ENCODE measurements at regions of chr2 and their contacts with region 1.

Region 1: DNA sequence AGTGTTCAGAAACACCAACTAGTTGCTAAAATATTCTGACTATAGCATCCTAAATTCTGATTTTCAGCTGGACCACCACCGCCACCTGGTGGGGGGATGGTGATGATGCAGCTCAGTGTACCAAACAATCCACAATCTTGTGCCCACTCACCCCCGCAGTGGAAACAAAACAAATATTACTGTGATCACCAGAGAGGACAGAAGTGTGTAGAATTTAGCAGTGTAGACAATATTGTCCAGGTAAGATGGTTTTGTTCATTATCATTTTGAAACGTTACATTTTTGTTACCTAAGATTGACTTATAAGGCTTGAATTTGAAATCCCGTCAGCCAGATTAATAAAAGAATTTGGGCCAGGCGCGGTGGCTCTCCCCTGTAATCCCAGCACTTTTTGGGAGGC is 31.7 kb upstream of the UBXN4 start:
- DNase-seq: peak; percentile 39
- ATAC-seq: peak; percentile 94
- H3K4me3 ChIP-seq: no peak overlapping the region
- H3K27ac ChIP-seq: no peak overlapping the region
- H3K4me1 ChIP-seq: no peaks in the 10 kb centered on the region
- H3K27me3 ChIP-seq: no peaks in the 10 kb centered on the region
- CTCF ChIP-seq: peak; percentile 89
- POLR2A ChIP-seq: no peak
- RAD21 ChIP-seq: peak; percentile 92

Region 2: DNA sequence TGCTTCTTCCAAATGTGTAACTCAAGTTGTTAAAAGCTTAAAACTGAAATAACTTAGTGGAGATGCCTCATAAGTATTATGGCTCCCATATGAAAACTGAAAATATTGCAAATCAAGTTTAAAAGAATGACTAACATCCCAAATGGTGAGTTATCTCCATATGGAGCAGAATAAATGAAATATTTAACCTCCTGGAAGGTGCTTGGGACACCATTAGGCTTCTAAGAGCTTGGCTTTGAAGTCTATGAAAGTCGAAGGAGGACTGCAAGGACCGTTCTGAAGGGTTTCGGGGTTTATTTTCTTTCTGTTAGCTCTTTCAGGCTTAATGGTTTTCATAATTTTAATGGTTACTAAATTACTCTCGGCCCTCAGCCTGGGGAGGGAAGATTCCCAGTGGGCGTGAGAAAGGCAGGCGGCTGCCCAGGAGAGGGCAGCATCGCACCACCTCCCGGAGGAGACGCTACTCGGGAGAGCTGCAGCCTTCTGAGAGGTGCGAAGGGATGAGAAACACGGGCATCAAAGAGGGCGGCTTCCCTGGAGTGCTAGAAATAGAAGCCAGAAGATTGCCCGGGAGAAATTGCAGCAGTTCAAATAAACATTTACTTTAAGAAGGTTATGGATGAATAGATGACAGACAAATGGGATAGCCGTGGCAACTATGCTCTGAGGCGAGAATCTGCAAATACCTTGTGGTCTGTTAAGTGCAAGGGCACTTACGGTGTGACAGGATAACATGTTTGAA is 705.8 kb before region 1 on chr2:
- CTCF ChIA-PET with region 1: interaction called, 21 read pairs
- POLR2A ChIA-PET with region 1: no interaction called
- dilution Hi-C with region 1: no loop called
- in situ Hi-C with region 1: loop called (anchors 5 kb)
- intact Hi-C with region 1: loop called (anchors 1 kb)
- DNase-seq: peak; percentile 62
- ATAC-seq: peak; percentile 100
- H3K4me3 ChIP-seq: no peak overlapping the region
- H3K27ac ChIP-seq: no peak overlapping the region
- H3K4me1 ChIP-seq: no peaks in the 10 kb centered on the region
- H3K27me3 ChIP-seq: peaks cover 17% of the 10 kb centered on the region
- CTCF ChIP-seq: peak; percentile 96
- POLR2A ChIP-seq: no peak
- RAD21 ChIP-seq: peak; percentile 99

Region 3: DNA sequence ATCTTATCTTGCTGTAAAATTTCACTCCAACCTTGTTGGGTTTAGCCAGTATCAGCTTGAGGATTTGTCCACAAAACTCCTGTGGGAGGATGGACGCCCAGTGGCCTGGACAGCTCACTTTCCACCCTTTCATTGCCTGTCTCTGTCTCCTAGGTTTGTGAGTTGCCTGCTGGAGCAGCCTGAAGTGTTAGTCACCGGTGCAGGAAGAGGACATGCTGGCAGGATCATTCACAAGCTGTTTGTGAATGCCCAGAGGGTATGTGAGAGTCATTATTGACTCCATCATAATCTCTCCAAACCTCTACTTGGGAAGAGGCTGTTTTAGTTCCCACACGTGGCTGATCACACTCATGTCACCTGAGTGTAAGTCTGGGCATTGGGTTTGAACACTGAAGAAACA is 545.6 kb before region 1 on chr2:
- CTCF ChIA-PET with region 1: no interaction called
- POLR2A ChIA-PET with region 1: no interaction called
- dilution Hi-C with region 1: no loop called
- in situ Hi-C with region 1: no loop called
- intact Hi-C with region 1: loop called (anchors 10 kb)
- DNase-seq: peak; percentile 89
- ATAC-seq: peak; percentile 95
- H3K4me3 ChIP-seq: no peak overlapping the region
- H3K27ac ChIP-seq: no peak overlapping the region
- H3K4me1 ChIP-seq: no peaks in the 10 kb centered on the region
- H3K27me3 ChIP-seq: no peaks in the 10 kb centered on the region
- CTCF ChIP-seq: no peak
- POLR2A ChIP-seq: no peak
- RAD21 ChIP-seq: peak; percentile 25; the same call in 1 of the 2 replicates

Region 4: GRCh38 chr2:135531231-135532228 is 178.5 kb before region 1 on chr2 and contains the start of gene R3HDM1:
- CTCF ChIA-PET with region 1: no interaction called
- POLR2A ChIA-PET with region 1: no interaction called
- dilution Hi-C with region 1: no loop called
- in situ Hi-C with region 1: no loop called
- intact Hi-C with region 1: loop called (anchors 5 kb)
- DNase-seq: peak; percentile 100
- ATAC-seq: peak; percentile 92
- H3K4me3 ChIP-seq: peak within 1 kb of the TSS; percentile 67
- H3K27ac ChIP-seq: peak within 1 kb of the TSS; percentile 68
- H3K4me1 ChIP-seq: no peaks in the 10 kb centered on the region
- H3K27me3 ChIP-seq: no peaks in the 10 kb centered on the region
- CTCF ChIP-seq: peak; percentile 29
- POLR2A ChIP-seq: no peak; the same call in 1 of the 2 replicates
- RAD21 ChIP-seq: peak; percentile 29; the same call in 1 of the 2 replicates
- total RNA-seq, gene R3HDM1: 5.9 and 7.8 TPM in 2 replicates

Region 5: GRCh38 chr2:135637456-135638087 is 72.4 kb before region 1 on chr2:
- CTCF ChIA-PET with region 1: no interaction called
- POLR2A ChIA-PET with region 1: no interaction called
- dilution Hi-C with region 1: no loop called
- in situ Hi-C with region 1: no loop called
- intact Hi-C with region 1: no loop called
- DNase-seq: no peak
- ATAC-seq: no peak
- H3K4me3 ChIP-seq: no peak overlapping the region
- H3K27ac ChIP-seq: no peak overlapping the region
- H3K4me1 ChIP-seq: no peaks in the 10 kb centered on the region
- H3K27me3 ChIP-seq: no peaks in the 10 kb centered on the region
- CTCF ChIP-seq: no peak
- POLR2A ChIP-seq: no peak
- RAD21 ChIP-seq: no peak

Region 6: DNA sequence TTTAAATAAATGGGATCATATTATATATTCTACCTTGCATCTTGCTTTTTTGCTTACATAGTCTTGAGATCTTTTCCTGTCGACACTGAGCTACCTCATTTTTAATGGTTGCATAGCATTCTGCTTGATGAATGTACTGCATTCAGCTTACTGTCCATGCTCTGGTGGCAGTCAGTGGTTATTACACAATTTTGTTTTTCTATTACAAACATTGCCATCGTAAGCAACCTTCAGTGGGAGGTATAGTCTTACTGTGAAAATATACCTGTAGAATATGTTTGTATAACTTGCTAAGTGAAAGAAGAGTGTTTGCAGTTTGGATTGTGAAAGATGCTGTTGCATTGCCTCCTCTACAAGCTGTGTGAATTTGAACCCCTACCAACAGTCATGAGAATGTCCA is 75.0 kb after region 1 on chr2:
- CTCF ChIA-PET with region 1: no interaction called
- POLR2A ChIA-PET with region 1: no interaction called
- dilution Hi-C with region 1: no loop called
- in situ Hi-C with region 1: no loop called
- intact Hi-C with region 1: no loop called
- DNase-seq: no peak
- ATAC-seq: no peak
- H3K4me3 ChIP-seq: no peak overlapping the region
- H3K27ac ChIP-seq: no peak overlapping the region
- H3K4me1 ChIP-seq: peaks cover 7% of the 10 kb centered on the region
- H3K27me3 ChIP-seq: no peaks in the 10 kb centered on the region
- CTCF ChIP-seq: no peak
- POLR2A ChIP-seq: no peak
- RAD21 ChIP-seq: no peak

Region 7: GRCh38 chr2:136917411-136917881 is 1207.5 kb after region 1 on chr2:
- CTCF ChIA-PET with region 1: no interaction called
- POLR2A ChIA-PET with region 1: no interaction called
- dilution Hi-C with region 1: no loop called
- in situ Hi-C with region 1: no loop called
- intact Hi-C with region 1: no loop called
- DNase-seq: no peak
- ATAC-seq: no peak
- H3K4me3 ChIP-seq: no peak overlapping the region
- H3K27ac ChIP-seq: no peak overlapping the region
- H3K4me1 ChIP-seq: no peaks in the 10 kb centered on the region
- H3K27me3 ChIP-seq: no peaks in the 10 kb centered on the region
- CTCF ChIP-seq: no peak
- POLR2A ChIP-seq: no peak
- RAD21 ChIP-seq: no peak

Measured in IMR-90 (cell line).